ENCODE measurements at regions of chr10 and their contacts with region 1.

Region 1: DNA sequence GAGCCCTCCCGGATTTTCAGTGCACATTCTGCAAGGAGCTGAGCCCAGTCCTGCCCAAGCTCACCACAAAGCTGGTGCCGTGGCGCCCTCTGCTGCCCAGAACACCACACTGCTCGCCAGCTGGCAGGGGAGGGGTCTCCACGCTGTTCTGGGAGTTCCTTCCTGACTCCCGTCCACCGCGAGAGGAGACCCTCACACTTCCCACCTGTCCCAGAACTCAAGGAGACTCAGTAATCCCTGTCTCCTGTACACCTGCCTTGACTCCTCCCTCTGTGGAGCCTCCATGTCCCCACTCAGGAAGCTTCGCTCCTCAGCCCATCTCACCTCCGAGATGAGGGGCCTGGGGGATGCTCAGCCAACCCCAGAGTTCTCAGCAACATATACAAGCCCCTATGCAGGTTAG is 11.3 kb downstream of the C10orf105 start:
- DNase-seq: peak; percentile 78
- H3K4me3 Mint-ChIP-seq: no peak overlapping the region
- H3K27ac Mint-ChIP-seq: no peak overlapping the region
- H3K4me1 Mint-ChIP-seq: peaks cover 35% of the 10 kb centered on the region
- H3K27me3 Mint-ChIP-seq: no peaks in the 10 kb centered on the region

Region 2: GRCh38 chr10:71314028-71314693 is 394.1 kb before region 1 on chr10:
- CTCF ChIA-PET with region 1: interaction called, 40 read pairs
- POLR2A ChIA-PET with region 1: no interaction called
- intact Hi-C with region 1: loop called (anchors 5 kb)
- DNase-seq: peak; percentile 67
- H3K4me3 Mint-ChIP-seq: no peak overlapping the region
- H3K27ac Mint-ChIP-seq: no peak overlapping the region
- H3K4me1 Mint-ChIP-seq: peaks cover 9% of the 10 kb centered on the region
- H3K27me3 Mint-ChIP-seq: peaks cover 7% of the 10 kb centered on the region

Region 3: DNA sequence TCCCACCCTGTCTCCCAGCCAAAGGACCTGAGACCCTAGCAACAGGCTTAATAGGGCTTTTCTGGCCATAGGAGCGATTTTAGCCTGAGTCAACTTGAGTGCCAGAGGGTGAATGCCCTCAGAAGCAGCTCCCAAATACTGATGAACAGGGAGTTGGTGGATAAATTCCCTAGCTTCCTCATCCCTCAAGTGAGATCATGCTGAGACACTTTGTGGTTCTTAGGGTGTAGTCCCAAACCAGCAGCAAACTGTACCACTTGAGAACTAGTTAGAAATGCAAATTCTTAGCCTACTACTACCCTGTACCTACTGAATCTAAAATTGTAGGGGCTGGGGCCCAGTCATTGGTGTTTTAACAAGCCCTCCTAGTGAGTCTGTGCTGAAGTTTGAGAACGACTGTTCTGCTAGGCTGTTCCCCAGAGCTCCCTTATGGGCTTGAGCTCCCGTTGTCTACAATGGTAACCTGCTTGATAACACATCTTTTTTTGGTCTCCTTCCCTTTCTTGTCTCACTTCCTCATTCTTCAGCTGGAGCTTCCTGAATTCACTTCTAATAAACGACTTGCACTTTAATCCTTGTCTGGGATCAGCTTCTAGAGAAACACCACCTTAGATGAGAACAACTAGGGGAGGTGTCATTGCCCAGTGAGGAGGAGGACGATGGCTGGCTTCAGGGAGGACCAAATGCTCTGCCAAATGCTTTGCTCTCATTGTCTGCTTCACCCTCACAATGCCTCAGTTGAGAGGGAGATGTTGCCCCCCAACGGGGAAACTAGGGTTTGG is 329.8 kb before region 1 on chr10:
- CTCF ChIA-PET with region 1: interaction called, 41 read pairs
- POLR2A ChIA-PET with region 1: no interaction called
- intact Hi-C with region 1: no loop called
- DNase-seq: no peak
- H3K4me3 Mint-ChIP-seq: no peak overlapping the region
- H3K27ac Mint-ChIP-seq: no peak overlapping the region
- H3K4me1 Mint-ChIP-seq: peaks cover 7% of the 10 kb centered on the region
- H3K27me3 Mint-ChIP-seq: no peaks in the 10 kb centered on the region

Region 4: GRCh38 chr10:71396084-71396720 is 312.1 kb before region 1 on chr10:
- CTCF ChIA-PET with region 1: interaction called, 13 read pairs
- POLR2A ChIA-PET with region 1: no interaction called
- intact Hi-C with region 1: loop called (anchors 5 kb)
- DNase-seq: peak; percentile 50
- H3K4me3 Mint-ChIP-seq: no peak overlapping the region
- H3K27ac Mint-ChIP-seq: no peak overlapping the region
- H3K4me1 Mint-ChIP-seq: peaks cover 7% of the 10 kb centered on the region
- H3K27me3 Mint-ChIP-seq: peaks cover 51% of the 10 kb centered on the region

Region 5: DNA sequence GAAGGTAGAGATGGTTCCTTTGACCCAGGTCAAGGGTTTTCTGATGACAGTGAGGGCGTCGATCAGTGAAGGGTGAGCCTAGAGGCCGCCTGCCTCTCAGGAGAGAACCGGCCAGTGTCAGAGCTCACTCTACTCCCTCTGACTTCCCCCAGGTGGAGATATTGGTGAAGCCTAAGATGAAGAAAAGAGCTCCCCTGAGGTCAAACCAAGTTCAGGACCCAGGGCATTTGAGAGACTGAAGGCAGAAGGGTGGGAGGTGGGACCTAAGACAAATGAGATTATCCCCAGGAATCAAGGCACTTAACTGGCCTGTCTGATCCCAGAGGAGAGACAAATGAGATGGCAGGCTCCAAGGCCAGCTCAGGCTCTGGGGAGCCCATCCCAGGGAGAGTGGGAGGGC is 206.9 kb before region 1 on chr10:
- CTCF ChIA-PET with region 1: no interaction called
- POLR2A ChIA-PET with region 1: no interaction called
- intact Hi-C with region 1: no loop called
- DNase-seq: no peak
- H3K4me3 Mint-ChIP-seq: no peak overlapping the region
- H3K27ac Mint-ChIP-seq: no peak overlapping the region
- H3K4me1 Mint-ChIP-seq: no peaks in the 10 kb centered on the region
- H3K27me3 Mint-ChIP-seq: peaks cover 4% of the 10 kb centered on the region

Region 6: DNA sequence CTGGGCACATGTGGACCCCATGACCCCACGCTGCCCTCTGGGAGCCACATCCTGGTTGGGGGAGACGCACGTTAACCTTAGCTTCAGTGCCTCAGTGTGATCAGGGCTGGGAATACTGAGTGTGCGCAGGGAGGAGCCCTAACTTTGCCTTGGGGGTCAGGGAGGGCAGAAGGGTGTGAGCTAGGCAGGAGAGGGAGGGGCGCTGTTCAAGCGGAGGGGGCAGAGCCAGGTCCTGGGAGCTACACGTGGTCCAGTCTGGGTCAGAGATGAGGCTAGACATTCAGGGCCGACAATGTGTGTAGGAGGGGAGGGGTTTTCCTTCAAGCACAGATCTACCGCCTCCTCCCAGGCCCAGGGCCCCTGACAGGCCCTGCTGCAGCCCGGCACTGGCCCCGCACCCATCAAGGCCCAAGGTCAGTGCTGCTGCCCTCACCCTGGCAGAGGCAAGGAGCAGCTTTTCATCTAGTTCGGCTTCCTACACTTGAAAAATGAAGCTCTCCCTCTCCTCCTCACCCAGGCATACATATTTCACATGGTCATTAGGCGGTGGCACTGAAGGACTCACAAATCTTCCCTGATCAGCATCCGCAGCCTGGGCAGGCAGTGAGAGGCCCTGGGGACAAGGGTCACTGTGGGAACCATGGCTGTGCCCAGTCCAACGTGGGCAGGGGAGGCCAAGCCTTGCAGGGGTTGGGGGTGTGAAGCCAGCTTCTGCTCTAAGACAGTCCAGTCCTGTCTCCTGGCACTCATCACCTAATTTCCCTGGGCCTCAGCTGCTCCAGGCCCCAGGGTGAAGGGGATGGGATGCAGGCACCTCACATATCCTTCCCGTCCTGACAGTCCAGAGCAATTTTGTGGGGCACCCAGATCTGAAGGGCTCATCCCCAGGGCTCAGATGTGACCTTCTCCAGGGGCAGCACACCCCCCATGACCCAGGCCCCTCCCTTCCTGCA is 36.0 kb before region 1 on chr10:
- CTCF ChIA-PET with region 1: no interaction called
- POLR2A ChIA-PET with region 1: no interaction called
- intact Hi-C with region 1: no loop called
- DNase-seq: no peak
- H3K4me3 Mint-ChIP-seq: no peak overlapping the region
- H3K27ac Mint-ChIP-seq: no peak overlapping the region
- H3K4me1 Mint-ChIP-seq: peaks cover 5% of the 10 kb centered on the region
- H3K27me3 Mint-ChIP-seq: no peaks in the 10 kb centered on the region

Region 7: GRCh38 chr10:71727738-71728737 is 19.7 kb after region 1 on chr10:
- CTCF ChIA-PET with region 1: interaction called, 55 read pairs
- POLR2A ChIA-PET with region 1: interaction called, 8 read pairs
- intact Hi-C with region 1: loop called (anchors 1 kb)
- DNase-seq: peak; percentile 87
- H3K4me3 Mint-ChIP-seq: peak overlapping the region; percentile 58
- H3K27ac Mint-ChIP-seq: peak overlapping the region; percentile 99
- H3K4me1 Mint-ChIP-seq: peaks cover 95% of the 10 kb centered on the region
- H3K27me3 Mint-ChIP-seq: no peaks in the 10 kb centered on the region

Region 8: GRCh38 chr10:71766702-71767419 is 58.6 kb after region 1 on chr10:
- CTCF ChIA-PET with region 1: interaction called, 47 read pairs
- POLR2A ChIA-PET with region 1: no interaction called
- intact Hi-C with region 1: loop called (anchors 5 kb)
- DNase-seq: peak; percentile 65
- H3K4me3 Mint-ChIP-seq: peak overlapping the region; percentile 38
- H3K27ac Mint-ChIP-seq: peak overlapping the region; percentile 96
- H3K4me1 Mint-ChIP-seq: peaks cover 93% of the 10 kb centered on the region
- H3K27me3 Mint-ChIP-seq: no peaks in the 10 kb centered on the region